ENCODE measurements at regions of chr14 and their contacts with region 1.

Region 1: DNA sequence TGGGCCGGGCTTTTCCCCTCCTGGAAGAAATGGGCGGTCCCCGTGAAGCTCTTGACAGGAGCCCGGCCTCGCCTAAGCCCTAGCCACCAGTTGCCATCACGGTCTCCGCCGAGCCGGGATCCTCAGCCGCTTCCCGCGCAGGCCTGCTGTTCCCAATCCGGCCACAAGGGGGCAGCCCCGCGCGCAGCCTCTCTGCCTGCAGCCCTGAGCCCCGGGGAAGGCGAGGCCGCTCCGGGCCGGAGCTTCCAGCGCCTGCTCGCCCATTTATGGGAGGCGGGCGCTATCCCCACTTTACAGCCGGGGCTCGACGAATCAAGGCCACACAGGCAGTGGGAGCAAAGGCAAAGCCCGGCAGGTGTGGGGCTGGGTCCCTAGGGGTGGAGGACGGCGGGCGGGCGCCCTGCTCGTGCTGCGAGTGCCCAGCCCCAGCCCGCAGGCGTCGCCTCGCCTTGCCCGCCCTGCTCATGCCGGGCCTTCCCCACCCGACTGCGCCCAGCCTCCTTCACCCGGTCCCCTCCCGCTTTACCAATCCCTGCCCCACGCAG is 61.5 kb downstream of the LGMN start:
- H3K4me3 ChIP-seq: no peak overlapping the region
- H3K27ac ChIP-seq: no peak overlapping the region; the same call in 1 of the 2 replicates
- H3K4me1 ChIP-seq: no peaks in the 10 kb centered on the region
- CTCF ChIP-seq: peak; percentile 93

Region 2: GRCh38 chr14:92698393-92698792 is 11.4 kb after region 1 on chr14:
- CTCF ChIA-PET with region 1: interaction called, 15 read pairs
- POLR2A ChIA-PET with region 1: no interaction called
- H3K4me3 ChIP-seq: no peak overlapping the region
- H3K27ac ChIP-seq: no peak overlapping the region
- H3K4me1 ChIP-seq: peaks cover 4% of the 10 kb centered on the region; the same call in 1 of the 2 replicates
- CTCF ChIP-seq: no peak

Region 3: DNA sequence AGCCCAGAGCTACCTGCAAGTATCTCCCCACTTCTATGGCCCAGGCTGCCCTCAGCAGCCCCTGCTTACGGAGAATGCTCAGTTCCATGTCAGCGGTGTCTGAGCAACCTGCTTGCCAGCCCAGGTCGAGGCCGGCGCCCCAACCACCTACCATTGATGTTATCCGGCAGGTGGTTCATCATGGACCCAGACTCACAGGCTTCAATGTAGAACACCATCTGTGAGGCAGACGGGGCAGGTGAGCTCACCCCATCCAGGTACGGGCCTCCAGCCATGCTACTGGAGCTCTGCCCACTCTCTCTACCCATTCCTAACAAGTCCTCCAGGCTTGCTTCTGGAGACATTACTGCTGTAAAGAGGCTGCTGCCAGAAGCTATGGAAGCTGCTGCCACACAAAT is 25.7 kb after region 1 on chr14:
- CTCF ChIA-PET with region 1: interaction called, 11 read pairs
- POLR2A ChIA-PET with region 1: interaction called, 4 read pairs
- H3K4me3 ChIP-seq: no peak overlapping the region
- H3K27ac ChIP-seq: no peak overlapping the region
- H3K4me1 ChIP-seq: no peaks in the 10 kb centered on the region; the same call in 1 of the 2 replicates
- CTCF ChIP-seq: no peak

Region 4: DNA sequence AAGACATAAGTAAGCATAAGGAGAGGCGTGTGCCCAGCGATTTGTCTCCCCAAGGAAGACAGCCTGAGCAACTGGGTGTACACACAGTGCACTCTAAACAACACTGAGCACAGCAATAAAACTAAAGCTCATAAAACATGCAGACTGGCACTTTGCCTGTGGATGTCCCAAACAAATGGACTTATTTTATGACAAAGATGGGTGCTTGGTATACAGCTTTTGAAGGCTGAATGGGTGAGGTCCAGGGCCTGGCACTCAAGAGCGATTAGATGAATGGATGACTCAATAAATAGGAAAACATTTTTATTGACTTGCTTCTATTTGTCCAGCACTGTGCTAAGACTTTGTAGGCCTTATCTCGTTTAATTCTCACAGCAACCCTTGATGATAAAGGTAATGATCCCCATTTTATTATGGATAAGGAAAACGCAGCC is 32.9 kb after region 1 on chr14:
- CTCF ChIA-PET with region 1: interaction called, 10 read pairs
- POLR2A ChIA-PET with region 1: interaction called, 4 read pairs
- H3K4me3 ChIP-seq: no peak overlapping the region
- H3K27ac ChIP-seq: no peak overlapping the region
- H3K4me1 ChIP-seq: peaks cover 3% of the 10 kb centered on the region
- CTCF ChIP-seq: no peak

Region 5: DNA sequence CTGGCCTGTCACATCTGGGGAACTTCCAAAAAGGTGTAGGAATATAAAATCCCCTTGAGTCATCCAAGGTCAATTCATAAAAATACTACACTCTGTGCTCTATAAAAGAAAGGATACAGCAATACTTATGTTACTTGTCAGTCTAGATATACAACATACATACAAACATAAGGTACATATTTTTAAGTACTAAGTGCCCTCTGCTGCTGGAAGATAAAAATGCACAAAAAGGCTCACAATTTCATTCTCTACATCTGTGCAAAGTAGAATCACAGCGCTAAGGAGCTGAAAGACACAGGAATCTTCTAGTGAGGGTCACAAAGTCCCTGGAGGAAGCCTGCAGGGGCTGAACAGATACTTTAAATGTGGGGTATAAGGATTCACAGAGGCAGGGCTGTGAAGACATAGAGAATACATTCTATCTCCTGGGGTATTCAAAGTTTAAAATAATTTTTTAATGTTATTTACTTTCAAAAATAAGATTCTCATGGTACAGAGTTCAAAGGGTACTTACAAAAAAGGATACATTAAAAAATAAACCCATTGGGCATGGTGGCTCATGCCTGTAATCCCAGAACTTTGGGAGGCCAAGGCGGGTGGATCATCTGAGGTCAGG is 97.0 kb after region 1 on chr14:
- CTCF ChIA-PET with region 1: interaction called, 19 read pairs
- POLR2A ChIA-PET with region 1: no interaction called
- H3K4me3 ChIP-seq: no peak overlapping the region
- H3K27ac ChIP-seq: no peak overlapping the region
- H3K4me1 ChIP-seq: no peaks in the 10 kb centered on the region
- CTCF ChIP-seq: peak; percentile 33; the same call in 1 of the 2 replicates